GM12878 (cell line): ENCODE measurements at regions of chr3 and their contacts with region 1.

Region 1: GRCh38 chr3:123642182-123642956 is 57.5 kb upstream of the HACD2 start:
- DNase-seq: peak; percentile 34
- ATAC-seq: peak; percentile 99
- H3K4me3 ChIP-seq: no peak overlapping the region
- H3K27ac ChIP-seq: no peak overlapping the region
- H3K4me1 ChIP-seq: no peaks in the 10 kb centered on the region
- H3K27me3 ChIP-seq: no peaks in the 10 kb centered on the region
- CTCF ChIP-seq: peak; percentile 80 to 89 (median 85)
- EP300 ChIP-seq: no peak
- POLR2A ChIP-seq: no peak
- RAD21 ChIP-seq: peak; percentile 54

Region 2: DNA sequence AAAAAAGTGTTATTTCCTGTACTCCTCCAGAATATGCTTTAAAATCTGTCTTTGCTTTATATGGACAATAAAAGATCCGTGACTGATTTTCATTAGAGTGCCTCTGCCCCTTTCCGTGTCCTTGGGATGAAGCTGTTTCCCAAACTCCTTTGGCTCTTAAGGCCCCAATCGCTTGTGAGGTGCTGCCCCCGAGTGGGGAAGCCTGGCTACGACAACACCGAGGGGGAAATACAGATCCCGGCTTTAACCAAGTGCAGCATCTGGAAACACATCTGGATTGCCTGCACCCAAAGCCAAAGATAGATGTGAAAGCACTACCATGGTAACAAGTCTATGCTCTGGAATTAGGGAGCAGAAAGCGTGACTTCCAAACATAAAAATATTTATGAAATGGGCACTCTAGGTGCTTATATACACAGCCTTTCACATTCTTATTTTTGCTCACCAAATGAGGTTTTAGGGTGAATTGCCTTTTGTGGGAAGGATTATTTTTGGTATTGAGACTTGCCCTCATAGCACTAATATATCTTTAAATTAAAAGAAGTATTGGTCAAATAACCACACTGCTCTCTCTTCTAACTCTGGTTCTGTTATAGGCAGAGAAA is 152.9 kb before region 1 on chr3:
- CTCF ChIA-PET with region 1: no interaction called
- POLR2A ChIA-PET with region 1: no interaction called
- RAD21 ChIA-PET with region 1: no interaction called
- SMC1A ChIA-PET with region 1: no interaction called
- in situ Hi-C with region 1: no loop called
- intact Hi-C with region 1: no loop called
- DNase-seq: no peak
- ATAC-seq: peak; percentile 82
- H3K4me3 ChIP-seq: no peak overlapping the region
- H3K27ac ChIP-seq: no peak overlapping the region
- H3K4me1 ChIP-seq: no peaks in the 10 kb centered on the region
- H3K27me3 ChIP-seq: no peaks in the 10 kb centered on the region
- CTCF ChIP-seq: peak; percentile 84 to 90 (median 88)
- EP300 ChIP-seq: no peak
- POLR2A ChIP-seq: no peak
- RAD21 ChIP-seq: peak; percentile 86

Region 3: DNA sequence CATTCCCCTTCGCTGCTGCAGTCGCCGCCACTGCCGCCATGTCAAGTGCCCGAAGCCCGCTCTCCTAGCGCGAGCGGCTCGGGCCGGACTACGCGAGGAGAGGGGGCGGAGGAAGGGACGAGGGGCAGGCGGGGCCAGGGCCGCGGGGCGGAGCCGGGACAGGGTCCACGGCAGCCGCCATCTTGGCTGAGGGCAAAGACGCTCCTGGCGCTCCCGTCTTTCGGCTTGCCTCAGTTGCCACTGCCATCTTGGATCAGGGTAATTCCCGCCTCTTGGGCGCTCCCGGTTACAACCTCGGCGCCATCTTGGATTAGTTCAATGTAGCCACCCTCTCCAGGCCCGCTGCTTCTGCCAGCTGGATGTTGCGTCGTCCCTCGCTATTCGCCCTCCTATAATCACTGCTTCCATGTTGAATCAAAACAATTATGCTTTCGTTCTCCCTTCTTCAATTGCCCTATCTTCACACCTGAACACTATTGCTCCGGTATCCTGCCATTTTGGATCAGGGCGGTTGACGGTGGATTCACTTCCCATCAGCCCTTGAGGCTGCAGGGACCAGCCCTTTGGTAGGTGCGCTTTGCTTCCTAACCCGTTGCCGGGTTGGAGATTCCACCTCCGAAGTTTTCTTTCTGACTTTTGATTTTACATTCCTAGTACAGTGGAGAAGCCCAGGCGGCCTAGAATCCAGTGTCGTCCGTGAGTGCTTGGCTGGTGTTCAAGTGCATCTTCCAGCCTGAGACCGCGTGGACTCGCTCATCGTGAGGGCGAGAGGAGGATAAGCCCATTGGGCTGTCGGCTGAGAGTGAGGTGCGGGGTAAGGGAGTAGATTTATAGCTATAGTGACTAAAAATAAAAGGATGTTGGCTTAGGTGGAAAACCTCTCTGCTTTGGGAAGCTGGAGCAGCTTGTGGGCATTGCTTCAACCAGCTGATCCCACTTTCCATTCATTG is 57.1 kb before region 1 on chr3 and contains the start of gene HACD2:
- CTCF ChIA-PET with region 1: interaction called, 12 read pairs
- POLR2A ChIA-PET with region 1: no interaction called
- RAD21 ChIA-PET with region 1: interaction called, 3 read pairs
- SMC1A ChIA-PET with region 1: no interaction called
- in situ Hi-C with region 1: no loop called
- intact Hi-C with region 1: no loop called
- DNase-seq: peak; percentile 90
- ATAC-seq: peak; percentile 95
- H3K4me3 ChIP-seq: peak within 1 kb of the TSS; percentile 86
- H3K27ac ChIP-seq: peak within 1 kb of the TSS; percentile 79
- H3K4me1 ChIP-seq: peaks cover 2% of the 10 kb centered on the region
- H3K27me3 ChIP-seq: no peaks in the 10 kb centered on the region
- CTCF ChIP-seq: no peak
- EP300 ChIP-seq: 0 out of 4 replicates have a peak, but pooled peaks of 1 of the 2 experiments have one; percentile 26
- POLR2A ChIP-seq: peak; percentile 87
- RAD21 ChIP-seq: no peak
- polyA plus RNA-seq, gene HACD2: 9.1 to 9.6 TPM

Region 4: DNA sequence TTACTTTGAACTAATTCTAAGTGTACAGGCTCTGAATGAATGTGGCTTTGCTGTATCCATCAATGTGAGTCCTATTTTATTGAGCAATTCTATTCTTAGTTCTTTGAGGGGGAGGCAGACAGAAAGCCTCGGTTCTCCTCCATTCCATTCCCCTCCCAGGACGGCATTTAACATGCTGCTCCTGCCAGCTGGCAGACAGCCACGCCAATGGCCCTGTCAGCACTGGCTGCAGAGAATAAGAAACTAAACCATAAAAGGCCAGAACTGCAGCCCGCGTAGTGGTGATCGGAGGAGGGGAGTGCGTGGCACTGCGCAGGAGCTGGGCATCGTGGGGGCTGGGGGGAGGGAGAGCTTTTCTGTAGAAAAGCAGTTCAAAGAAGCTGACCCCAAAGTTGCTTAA is 18.5 kb after region 1 on chr3:
- CTCF ChIA-PET with region 1: interaction called, 17 read pairs
- POLR2A ChIA-PET with region 1: no interaction called
- RAD21 ChIA-PET with region 1: interaction called, 3 read pairs
- SMC1A ChIA-PET with region 1: interaction called, 3 read pairs
- in situ Hi-C with region 1: no loop called
- intact Hi-C with region 1: no loop called
- DNase-seq: no peak
- ATAC-seq: no peak
- H3K4me3 ChIP-seq: no peak overlapping the region
- H3K27ac ChIP-seq: no peak overlapping the region
- H3K4me1 ChIP-seq: no peaks in the 10 kb centered on the region
- H3K27me3 ChIP-seq: no peaks in the 10 kb centered on the region; a peak in 2 of 4 replicates
- CTCF ChIP-seq: no peak
- EP300 ChIP-seq: no peak
- POLR2A ChIP-seq: no peak
- RAD21 ChIP-seq: no peak

Region 5: GRCh38 chr3:123723522-123724168 is 81.3 kb after region 1 on chr3:
- CTCF ChIA-PET with region 1: interaction called, 32 read pairs
- POLR2A ChIA-PET with region 1: no interaction called
- RAD21 ChIA-PET with region 1: no interaction called
- SMC1A ChIA-PET with region 1: interaction called, 5 read pairs
- in situ Hi-C with region 1: loop called (anchors 5 kb)
- intact Hi-C with region 1: no loop called
- DNase-seq: peak; percentile 27
- ATAC-seq: peak; percentile 90
- H3K4me3 ChIP-seq: no peak overlapping the region
- H3K27ac ChIP-seq: no peak overlapping the region
- H3K4me1 ChIP-seq: no peaks in the 10 kb centered on the region
- H3K27me3 ChIP-seq: no peaks in the 10 kb centered on the region; a peak in 1 of 4 replicates
- CTCF ChIP-seq: peak; percentile 81 to 89 (median 87)
- EP300 ChIP-seq: no peak
- POLR2A ChIP-seq: no peak
- RAD21 ChIP-seq: peak; percentile 67